Mammary epithelial cell (primary cell): ENCODE measurements at regions of chr5 and their contacts with region 1.

Region 1: GRCh38 chr5:134370871-134371833 is at the start of gene UBE2B:
- DNase-seq: peak; percentile 99
- H3K4me3 ChIP-seq: peak within 1 kb of the TSS; percentile 94 to 97 (median 95)
- H3K27ac ChIP-seq: peak within 1 kb of the TSS; percentile 89
- H3K4me1 ChIP-seq: peaks cover 9% of the 10 kb centered on the region
- H3K27me3 ChIP-seq: no peaks in the 10 kb centered on the region
- CTCF ChIP-seq: no peak
- total RNA-seq, gene UBE2B: 37.2 to 83.3 TPM

Region 2: DNA sequence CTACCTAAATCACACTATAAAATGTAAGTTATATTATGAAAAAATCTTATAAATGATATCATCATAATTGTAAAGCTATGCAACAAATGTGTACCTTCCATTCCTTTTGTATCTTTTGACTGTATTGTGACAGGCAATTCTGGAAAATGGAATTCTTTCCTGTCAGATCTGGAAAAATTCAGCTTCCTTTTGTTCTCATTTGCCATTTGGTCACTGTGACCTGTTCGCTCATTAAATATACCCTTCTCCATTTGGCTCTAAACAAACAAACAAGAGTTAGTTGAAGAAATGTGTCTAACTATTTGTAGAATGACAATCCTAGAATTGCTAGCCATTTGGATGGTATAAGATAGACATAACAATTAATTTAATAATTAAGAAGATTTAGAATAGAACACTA is 66.8 kb before region 1 on chr5:
- CTCF ChIA-PET with region 1: no interaction called
- dilution Hi-C with region 1: no loop called
- in situ Hi-C with region 1: no loop called
- intact Hi-C with region 1: loop called (anchors 2 kb)
- DNase-seq: no peak
- H3K4me3 ChIP-seq: no peak overlapping the region
- H3K27ac ChIP-seq: no peak overlapping the region
- H3K4me1 ChIP-seq: no peaks in the 10 kb centered on the region
- H3K27me3 ChIP-seq: no peaks in the 10 kb centered on the region
- CTCF ChIP-seq: no peak

Region 3: DNA sequence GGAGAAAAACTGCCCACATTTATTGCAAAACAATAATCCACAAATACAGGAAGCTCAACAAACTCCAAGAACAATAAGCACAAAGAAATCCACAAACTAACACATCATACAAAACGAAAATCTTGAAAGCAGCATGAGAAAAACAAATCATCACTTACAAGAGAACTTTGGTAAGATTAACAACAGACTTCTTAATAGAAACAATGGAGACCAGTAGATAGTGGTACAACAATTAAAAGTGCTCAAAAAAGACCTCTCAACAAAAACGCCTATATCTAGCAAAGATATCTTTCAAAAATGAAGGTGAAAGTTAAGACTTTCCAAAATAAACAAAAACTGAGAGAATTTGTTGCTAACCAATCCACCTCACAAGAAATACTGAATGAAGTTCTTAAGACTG is 42.5 kb before region 1 on chr5:
- CTCF ChIA-PET with region 1: no interaction called
- dilution Hi-C with region 1: loop called (anchors 5 kb)
- in situ Hi-C with region 1: no loop called
- intact Hi-C with region 1: no loop called
- DNase-seq: no peak
- H3K4me3 ChIP-seq: no peak overlapping the region
- H3K27ac ChIP-seq: no peak overlapping the region
- H3K4me1 ChIP-seq: no peaks in the 10 kb centered on the region
- H3K27me3 ChIP-seq: no peaks in the 10 kb centered on the region
- CTCF ChIP-seq: no peak